Activated naive CD4-positive, alpha-beta T cell treated with anti-CD3 and anti-CD28 coated beads for 36 hours (primary cell): ENCODE measurements at regions of chr7 and their contacts with region 1.

Region 1: DNA sequence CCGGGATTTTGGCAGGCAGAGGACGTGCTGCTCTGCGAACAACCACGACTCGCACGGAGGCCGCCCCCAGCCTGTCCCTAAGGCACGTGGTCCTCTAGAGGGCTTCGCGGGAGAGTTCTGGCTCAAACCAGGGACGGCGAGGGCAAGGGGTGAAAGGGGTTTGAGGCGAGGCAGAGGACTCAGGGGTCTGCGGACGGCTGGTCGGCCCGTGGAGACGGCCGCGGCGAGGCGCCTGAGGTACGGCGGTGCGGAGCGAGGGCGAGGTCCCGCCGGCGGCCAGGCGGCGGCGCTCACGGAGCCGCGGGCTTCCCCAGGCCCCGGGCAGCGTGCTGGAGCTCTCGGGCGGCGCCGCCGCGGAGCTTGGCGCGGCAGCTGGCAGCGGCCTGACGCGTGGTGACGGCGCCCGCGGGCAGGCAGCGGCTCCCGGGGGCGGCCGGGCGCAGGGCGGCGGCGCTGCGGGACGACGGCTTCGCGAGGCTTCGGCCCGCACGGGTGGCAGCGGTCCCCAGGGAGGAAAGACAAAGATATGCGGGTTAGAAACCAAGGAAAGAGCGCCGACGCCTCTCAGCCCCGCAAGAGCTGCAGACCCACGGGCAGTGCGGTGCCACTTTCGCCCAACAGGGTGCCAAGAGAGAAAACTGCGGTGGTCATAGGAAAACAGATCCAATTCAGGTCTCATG is 44.8 kb downstream of the ZNF800 start:
- DNase-seq: peak; percentile 77
- H3K4me3 Mint-ChIP-seq: peak overlapping the region; percentile 36
- H3K27ac Mint-ChIP-seq: no peak overlapping the region
- H3K4me1 Mint-ChIP-seq: peaks cover 21% of the 10 kb centered on the region
- H3K27me3 Mint-ChIP-seq: no peaks in the 10 kb centered on the region

Region 2: GRCh38 chr7:127137146-127137545 is 210.6 kb before region 1 on chr7:
- CTCF ChIA-PET with region 1: no interaction called
- intact Hi-C with region 1: no loop called
- DNase-seq: no peak
- H3K4me3 Mint-ChIP-seq: no peak overlapping the region
- H3K27ac Mint-ChIP-seq: no peak overlapping the region
- H3K4me1 Mint-ChIP-seq: no peaks in the 10 kb centered on the region
- H3K27me3 Mint-ChIP-seq: peaks cover 12% of the 10 kb centered on the region

Region 3: GRCh38 chr7:127253281-127254162 is 94.2 kb before region 1 on chr7:
- CTCF ChIA-PET with region 1: interaction called, 4 read pairs
- intact Hi-C with region 1: loop called (anchors 2 kb)
- DNase-seq: peak; percentile 61
- H3K4me3 Mint-ChIP-seq: peak overlapping the region; percentile 76
- H3K27ac Mint-ChIP-seq: no peak overlapping the region
- H3K4me1 Mint-ChIP-seq: peaks cover 16% of the 10 kb centered on the region
- H3K27me3 Mint-ChIP-seq: peaks cover 57% of the 10 kb centered on the region

Region 4: DNA sequence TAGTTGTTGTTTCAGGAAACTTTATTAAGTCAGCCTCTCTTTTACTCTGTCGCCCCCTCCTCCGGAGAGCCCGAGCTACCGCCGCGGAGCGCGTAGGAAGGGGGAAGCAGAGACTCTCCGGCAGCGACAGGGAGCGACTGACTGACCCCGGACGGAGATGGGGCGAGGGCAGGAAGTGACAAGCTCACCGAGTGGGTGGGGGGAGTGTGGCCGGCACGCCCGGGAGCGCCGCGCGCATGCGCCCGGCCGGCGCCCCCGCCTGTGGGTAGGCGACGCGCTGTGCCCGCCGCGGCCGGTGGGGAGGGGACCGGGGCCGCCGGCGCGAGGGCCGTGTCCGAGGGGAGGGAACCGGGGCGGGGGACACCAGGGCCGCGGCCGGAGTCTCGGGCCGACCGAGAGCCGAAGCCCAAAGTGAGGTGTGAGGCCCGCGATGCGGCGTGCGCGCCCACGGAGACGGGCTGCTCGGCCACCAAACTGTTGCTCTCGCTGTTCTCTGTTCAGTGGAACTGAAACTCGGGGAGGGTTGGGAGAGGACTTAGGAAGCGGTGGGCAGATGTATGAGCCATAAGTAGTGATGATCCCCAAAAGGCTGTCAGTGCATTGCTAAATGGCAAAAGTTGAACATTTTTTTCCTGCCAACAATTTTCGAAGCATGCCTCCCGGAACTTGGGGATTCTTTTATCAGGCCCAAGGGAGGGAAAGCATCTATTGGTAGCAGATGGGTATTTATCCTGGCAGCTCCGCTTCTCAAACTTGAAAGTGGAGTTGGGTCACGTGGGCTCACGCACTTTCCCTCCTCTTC is 45.1 kb after region 1 on chr7 and contains the start of gene ZNF800:
- CTCF ChIA-PET with region 1: interaction called, 3 read pairs
- intact Hi-C with region 1: loop called (anchors 1 kb)
- DNase-seq: peak; percentile 89
- H3K4me3 Mint-ChIP-seq: peak within 1 kb of the TSS; percentile 95
- H3K27ac Mint-ChIP-seq: peak within 1 kb of the TSS; percentile 93
- H3K4me1 Mint-ChIP-seq: peaks cover 61% of the 10 kb centered on the region
- H3K27me3 Mint-ChIP-seq: no peaks in the 10 kb centered on the region
- total RNA-seq, gene ZNF800: 18.2 to 19.5 TPM

Region 5: GRCh38 chr7:127447326-127447945 is 99.7 kb after region 1 on chr7:
- CTCF ChIA-PET with region 1: interaction called, 14 read pairs
- intact Hi-C with region 1: loop called (anchors 1 kb)
- DNase-seq: peak; percentile 52
- H3K4me3 Mint-ChIP-seq: no peak overlapping the region
- H3K27ac Mint-ChIP-seq: no peak overlapping the region
- H3K4me1 Mint-ChIP-seq: peaks cover 15% of the 10 kb centered on the region
- H3K27me3 Mint-ChIP-seq: no peaks in the 10 kb centered on the region

Region 6: DNA sequence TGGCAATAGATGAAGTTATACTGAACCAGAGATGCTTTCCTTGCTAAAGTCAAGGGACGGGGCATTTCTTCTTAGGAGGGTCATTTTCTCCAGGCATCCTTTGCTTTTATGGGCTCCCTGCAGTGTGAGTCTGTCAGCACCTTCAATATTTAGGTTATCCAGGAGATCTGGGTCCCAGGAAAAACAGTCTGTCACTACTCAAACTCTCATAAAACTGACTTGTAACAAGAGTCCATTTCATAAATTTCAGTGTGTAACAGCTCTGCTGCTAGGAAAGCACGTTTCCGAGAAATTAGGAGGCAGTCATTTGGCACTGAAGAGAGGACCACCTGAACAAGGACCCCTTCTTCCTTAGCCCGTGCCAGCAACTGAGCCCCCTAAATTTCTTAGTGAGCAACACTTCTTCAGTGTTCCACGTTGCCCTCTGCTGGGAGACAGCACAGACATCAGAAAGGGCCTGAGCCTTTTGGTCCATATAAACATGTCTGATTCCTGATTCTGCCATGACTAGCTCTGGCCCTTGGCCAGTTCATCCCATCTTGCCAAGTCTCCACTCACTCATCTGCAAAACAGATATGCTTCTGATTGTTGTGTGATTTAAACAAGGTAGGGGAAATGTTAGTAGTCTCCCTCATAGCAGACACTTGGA is 230.5 kb after region 1 on chr7:
- CTCF ChIA-PET with region 1: no interaction called
- intact Hi-C with region 1: loop called (anchors 2 kb)
- DNase-seq: no peak
- H3K4me3 Mint-ChIP-seq: no peak overlapping the region
- H3K27ac Mint-ChIP-seq: no peak overlapping the region
- H3K4me1 Mint-ChIP-seq: peaks cover 30% of the 10 kb centered on the region
- H3K27me3 Mint-ChIP-seq: no peaks in the 10 kb centered on the region